PC-3 (cell line): ENCODE measurements at regions of chr6 and their contacts with region 1.

Region 1: DNA sequence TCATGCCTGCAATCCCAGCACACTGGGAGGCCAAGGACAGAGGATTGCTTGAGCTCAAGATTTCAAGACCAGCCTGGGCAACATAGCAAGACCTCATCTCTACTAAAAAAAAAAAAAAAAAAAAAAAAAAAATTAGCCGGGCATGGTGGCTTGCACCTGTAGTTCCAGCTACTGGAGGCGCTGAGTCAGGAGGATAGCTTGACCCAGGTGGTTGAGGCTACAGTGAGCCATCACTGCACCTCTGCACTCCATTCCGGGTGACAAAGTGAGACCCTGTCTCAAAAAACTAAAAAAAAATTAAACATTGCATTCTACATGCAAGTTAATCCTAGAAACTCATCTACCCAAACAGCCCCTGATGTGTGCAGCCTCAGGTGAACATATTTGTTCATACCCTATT is 7.3 kb upstream of the TRAM2 start:
- DNase-seq: no peak
- ATAC-seq: no peak
- H3K4me3 ChIP-seq: no peak overlapping the region
- H3K27ac ChIP-seq: no peak overlapping the region
- H3K4me1 ChIP-seq: no peaks in the 10 kb centered on the region
- H3K27me3 ChIP-seq: no peaks in the 10 kb centered on the region
- CTCF ChIP-seq: no peak

Region 2: GRCh38 chr6:52233975-52234823 is 350.0 kb before region 1 on chr6:
- CTCF ChIA-PET with region 1: no interaction called
- POLR2A ChIA-PET with region 1: no interaction called
- intact Hi-C with region 1: no loop called
- DNase-seq: peak; percentile 90
- ATAC-seq: peak; percentile 100
- H3K4me3 ChIP-seq: peak overlapping the region; percentile 40; the same call in 1 of the 2 replicates
- H3K27ac ChIP-seq: no peak overlapping the region
- H3K4me1 ChIP-seq: peaks cover 6% of the 10 kb centered on the region; the same call in 1 of the 2 replicates
- H3K27me3 ChIP-seq: peaks cover 19% of the 10 kb centered on the region
- CTCF ChIP-seq: peak; percentile 83

Region 3: GRCh38 chr6:52435345-52435744 is 148.9 kb before region 1 on chr6:
- CTCF ChIA-PET with region 1: no interaction called
- POLR2A ChIA-PET with region 1: no interaction called
- intact Hi-C with region 1: no loop called
- DNase-seq: no peak
- ATAC-seq: peak; percentile 33; the same call in 1 of the 2 replicates
- H3K4me3 ChIP-seq: no peak overlapping the region
- H3K27ac ChIP-seq: no peak overlapping the region
- H3K4me1 ChIP-seq: peaks cover 8% of the 10 kb centered on the region; the same call in 1 of the 2 replicates
- H3K27me3 ChIP-seq: no peaks in the 10 kb centered on the region
- CTCF ChIP-seq: no peak

Region 4: GRCh38 chr6:52546678-52547077 is 37.5 kb before region 1 on chr6:
- CTCF ChIA-PET with region 1: no interaction called
- POLR2A ChIA-PET with region 1: no interaction called
- intact Hi-C with region 1: no loop called
- DNase-seq: no peak
- ATAC-seq: no peak
- H3K4me3 ChIP-seq: no peak overlapping the region
- H3K27ac ChIP-seq: no peak overlapping the region
- H3K4me1 ChIP-seq: peaks cover 58% of the 10 kb centered on the region
- H3K27me3 ChIP-seq: no peaks in the 10 kb centered on the region
- CTCF ChIP-seq: no peak

Region 5: DNA sequence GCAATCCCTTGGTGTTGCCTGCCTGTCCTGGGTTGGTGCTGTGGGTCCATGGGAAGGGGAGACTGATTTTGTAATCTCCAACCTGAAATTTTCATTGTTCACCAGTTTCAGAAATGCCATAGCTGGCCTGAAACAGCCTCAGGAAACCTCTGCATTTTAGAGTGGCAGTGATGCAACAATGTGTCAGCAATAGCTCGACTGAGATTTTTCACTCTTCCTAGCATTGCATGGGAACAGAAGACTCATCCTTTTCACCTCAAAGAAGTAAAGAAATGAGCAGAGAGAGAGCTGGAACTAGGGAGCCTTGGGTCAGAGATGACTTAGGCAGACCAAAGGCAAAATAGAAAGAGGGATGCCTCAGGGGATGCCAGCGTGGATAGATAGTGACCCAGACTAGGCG is 63.0 kb after region 1 on chr6:
- CTCF ChIA-PET with region 1: interaction called, 11 read pairs
- POLR2A ChIA-PET with region 1: no interaction called
- intact Hi-C with region 1: no loop called
- DNase-seq: peak; percentile 25
- ATAC-seq: no peak
- H3K4me3 ChIP-seq: no peak overlapping the region
- H3K27ac ChIP-seq: no peak overlapping the region
- H3K4me1 ChIP-seq: no peaks in the 10 kb centered on the region
- H3K27me3 ChIP-seq: no peaks in the 10 kb centered on the region
- CTCF ChIP-seq: no peak